Dendritic cell treated with granulocyte-macrophage colony-stimulating factor and Interleukin-4, amounts not matched to agents 40 ng/mL and 50 ng/mL, for 4 days (primary cell): ENCODE measurements at regions of chr16 and their contacts with region 1.

Region 1: GRCh38 chr16:87853411-87854052 is 15.8 kb downstream of the SLC7A5 start:
- H3K4me3 Mint-ChIP-seq: peak overlapping the region; percentile 54
- H3K27ac Mint-ChIP-seq: peak overlapping the region; percentile 74
- H3K4me1 Mint-ChIP-seq: peaks cover 63% of the 10 kb centered on the region
- H3K27me3 Mint-ChIP-seq: peaks cover 10% of the 10 kb centered on the region

Region 2: DNA sequence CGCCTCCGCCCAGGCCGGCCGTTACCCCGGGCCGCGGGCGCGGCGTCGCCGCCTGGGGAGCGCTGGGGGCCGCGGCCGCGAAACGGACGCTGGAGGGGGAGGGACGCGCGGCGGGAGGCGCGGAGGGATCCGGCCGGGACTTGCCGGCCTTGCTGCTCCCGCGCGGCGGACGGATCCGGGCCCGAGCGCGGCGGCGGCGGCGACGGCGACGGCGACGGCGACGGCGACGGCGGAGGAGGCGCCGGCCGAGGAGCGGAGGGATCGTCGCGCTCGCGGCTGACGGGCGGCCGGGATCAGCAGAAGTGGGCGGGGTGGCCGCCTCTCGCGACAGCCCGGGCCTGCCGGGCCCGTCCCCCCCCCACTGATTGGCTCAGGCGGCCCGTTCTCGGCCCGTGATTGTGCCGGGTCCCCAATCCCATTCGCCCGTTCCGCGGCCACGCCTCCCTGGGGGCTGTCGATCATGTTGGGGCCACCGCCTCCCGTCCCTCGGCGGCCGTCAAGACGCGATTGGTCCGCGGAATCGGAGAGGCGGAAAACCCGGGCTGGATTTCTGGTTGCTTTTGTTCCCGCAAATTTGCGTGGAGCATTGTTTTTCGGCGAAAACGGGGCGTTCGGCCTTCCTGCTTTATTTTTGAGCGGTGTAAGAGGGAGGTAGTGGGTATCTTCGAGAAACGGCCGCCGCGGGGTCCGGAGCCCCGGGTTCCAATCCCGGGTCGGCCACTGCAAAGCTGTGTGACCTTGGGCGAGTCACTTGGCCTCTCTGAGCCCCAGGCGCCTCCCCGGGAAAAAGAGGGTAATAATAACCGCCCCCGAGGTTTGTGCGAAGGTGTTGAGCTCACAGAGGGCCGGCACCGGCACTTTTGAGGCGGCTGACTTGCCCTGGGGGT is 360.6 kb before region 1 on chr16 and contains the start of gene ZCCHC14:
- intact Hi-C with region 1: no loop called
- H3K4me3 Mint-ChIP-seq: peak within 1 kb of the TSS; percentile 82
- H3K27ac Mint-ChIP-seq: peak within 1 kb of the TSS; percentile 81
- H3K4me1 Mint-ChIP-seq: peaks cover 54% of the 10 kb centered on the region
- H3K27me3 Mint-ChIP-seq: peaks cover 61% of the 10 kb centered on the region

Region 3: DNA sequence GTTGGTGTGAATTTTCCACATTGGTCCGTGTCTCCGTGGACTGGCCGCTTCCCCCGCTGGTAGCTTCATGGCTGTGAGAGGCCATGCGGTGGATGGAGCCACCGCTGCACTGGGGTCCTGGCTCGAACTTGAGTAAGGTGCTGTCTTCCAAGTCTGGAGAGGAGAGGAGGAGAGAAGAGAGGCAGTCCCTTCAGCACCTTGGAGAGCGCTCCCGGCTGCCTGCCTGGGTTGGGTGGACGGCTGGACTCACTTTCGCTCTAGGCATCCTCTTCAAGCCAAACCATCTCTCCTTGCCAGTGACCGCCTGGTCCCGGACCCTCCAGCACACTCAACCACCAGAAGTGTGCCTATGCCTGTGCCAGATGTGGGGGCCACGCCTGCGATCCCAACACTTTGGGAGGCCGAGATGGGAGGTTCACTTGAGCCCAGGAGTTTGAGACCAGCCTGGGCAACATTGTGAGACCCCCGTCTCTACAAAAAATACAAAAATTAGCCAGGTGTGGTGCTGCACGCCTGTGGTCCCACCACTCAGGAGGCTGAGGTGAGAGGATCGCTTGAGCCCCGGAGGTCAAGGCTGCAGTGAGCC is 245.0 kb before region 1 on chr16:
- intact Hi-C with region 1: no loop called
- H3K4me3 Mint-ChIP-seq: no peak overlapping the region
- H3K27ac Mint-ChIP-seq: no peak overlapping the region
- H3K4me1 Mint-ChIP-seq: no peaks in the 10 kb centered on the region
- H3K27me3 Mint-ChIP-seq: peaks cover 40% of the 10 kb centered on the region

Region 4: DNA sequence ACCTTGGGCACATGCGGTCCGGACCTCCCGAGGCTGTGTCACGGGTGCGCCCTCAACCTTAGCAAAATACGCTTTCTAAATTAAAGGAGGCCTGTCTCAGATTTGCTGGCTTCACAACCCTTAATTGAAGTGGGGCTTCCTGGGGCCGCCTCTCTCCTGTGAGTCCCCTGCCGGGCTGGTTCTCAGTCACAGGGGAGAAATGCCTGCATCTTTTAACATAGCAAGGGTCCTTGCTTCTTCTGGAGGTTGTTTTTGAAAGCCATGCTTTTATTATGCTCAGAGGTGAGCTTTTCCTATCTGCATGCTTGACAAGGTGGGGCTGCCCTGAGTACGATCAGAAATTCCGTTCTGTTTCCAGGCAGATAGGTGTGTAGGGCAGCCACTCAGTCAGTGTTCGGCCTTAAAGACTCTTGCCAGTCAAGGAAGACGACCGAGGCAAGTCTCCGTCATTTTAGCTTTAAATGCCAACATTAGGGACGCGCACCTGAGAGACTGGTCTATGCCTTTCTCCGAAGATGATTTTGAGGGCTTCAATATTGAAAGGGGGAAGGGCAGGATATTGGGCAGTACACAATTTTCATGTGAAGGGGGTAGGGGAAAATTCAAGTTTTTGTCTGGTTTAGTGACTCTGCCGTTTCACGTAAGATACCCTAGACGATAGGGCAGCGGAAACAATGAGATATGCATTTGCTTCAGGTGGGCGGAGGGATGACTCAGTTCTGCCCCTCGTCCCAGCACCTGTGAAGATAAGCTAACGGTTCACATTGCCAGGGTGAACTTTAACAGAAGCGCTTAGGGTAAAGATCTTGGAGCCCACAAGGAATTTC is 21.3 kb after region 1 on chr16:
- intact Hi-C with region 1: loop called (anchors 1 kb)
- H3K4me3 Mint-ChIP-seq: no peak overlapping the region
- H3K27ac Mint-ChIP-seq: no peak overlapping the region
- H3K4me1 Mint-ChIP-seq: peaks cover 22% of the 10 kb centered on the region
- H3K27me3 Mint-ChIP-seq: peaks cover 26% of the 10 kb centered on the region

Region 5: DNA sequence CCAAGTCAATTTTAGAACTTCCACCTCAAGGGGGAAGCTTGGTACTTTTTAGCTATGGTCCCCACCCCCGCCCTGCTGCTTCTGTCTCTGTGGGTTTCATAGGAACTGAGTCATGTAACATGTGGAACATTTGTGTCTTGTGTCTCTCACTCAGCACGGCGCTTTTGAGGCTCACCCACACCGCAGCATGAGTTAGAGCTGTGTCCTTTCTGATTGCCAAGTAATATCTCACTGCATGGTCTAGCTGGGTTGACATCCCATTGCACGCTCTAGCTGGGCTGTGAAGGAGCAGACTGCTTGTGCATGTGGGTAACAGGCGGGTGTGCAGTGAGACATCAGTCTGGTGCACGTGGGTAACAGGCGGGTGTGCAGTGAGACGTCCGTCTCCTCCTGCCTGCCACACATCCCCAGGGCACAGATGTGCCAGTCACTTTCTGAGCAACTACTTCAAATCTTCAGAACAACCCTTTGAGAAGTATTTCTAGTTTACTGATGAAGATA is 42.2 kb after region 1 on chr16:
- intact Hi-C with region 1: loop called (anchors 10 kb)
- H3K4me3 Mint-ChIP-seq: peak overlapping the region; percentile 34
- H3K27ac Mint-ChIP-seq: peak overlapping the region; percentile 88
- H3K4me1 Mint-ChIP-seq: peaks cover 56% of the 10 kb centered on the region
- H3K27me3 Mint-ChIP-seq: peaks cover 17% of the 10 kb centered on the region

Region 6: GRCh38 chr16:87924422-87925298 is 71.1 kb after region 1 on chr16:
- intact Hi-C with region 1: no loop called
- H3K4me3 Mint-ChIP-seq: no peak overlapping the region
- H3K27ac Mint-ChIP-seq: no peak overlapping the region
- H3K4me1 Mint-ChIP-seq: peaks cover 28% of the 10 kb centered on the region
- H3K27me3 Mint-ChIP-seq: peaks cover 41% of the 10 kb centered on the region

Region 7: DNA sequence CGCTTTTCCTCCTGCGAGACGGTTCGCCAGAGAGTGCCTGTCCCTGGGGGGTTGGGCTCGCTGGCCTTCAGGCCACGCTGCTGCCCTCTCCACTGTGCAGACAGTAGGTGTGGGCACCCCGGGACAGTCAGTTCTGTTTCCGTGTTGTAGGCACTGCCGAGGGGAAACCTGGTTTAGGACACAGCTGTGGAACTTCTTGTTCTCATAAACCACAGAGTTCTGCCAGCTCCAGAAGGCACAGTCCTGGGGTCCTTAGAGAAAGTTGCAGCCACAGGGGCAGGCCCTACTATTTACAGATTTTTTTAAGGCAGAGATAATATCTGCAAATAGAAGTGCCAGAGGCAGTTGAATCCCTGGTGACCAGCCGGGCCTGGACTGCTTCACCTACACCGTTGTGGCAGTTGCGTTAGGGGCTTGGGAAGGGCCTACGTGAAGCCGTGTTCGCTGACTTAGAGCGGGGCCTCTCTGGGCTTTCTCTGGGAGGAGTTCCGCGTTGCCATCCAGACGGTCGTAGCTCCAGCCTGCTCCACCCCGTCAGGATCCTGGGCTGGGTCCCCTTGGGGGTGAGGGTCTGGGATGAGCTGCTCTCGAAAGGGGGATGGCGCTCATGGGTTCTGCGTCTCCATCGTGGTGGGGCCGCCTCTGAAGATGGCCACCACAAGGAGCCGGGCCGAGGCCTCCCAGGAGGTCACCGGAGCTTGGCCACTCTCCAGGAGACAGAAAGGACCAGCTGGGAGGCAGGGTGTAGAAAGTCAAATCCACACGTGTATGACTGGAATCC is 224.0 kb after region 1 on chr16:
- intact Hi-C with region 1: no loop called
- H3K4me3 Mint-ChIP-seq: no peak overlapping the region
- H3K27ac Mint-ChIP-seq: no peak overlapping the region
- H3K4me1 Mint-ChIP-seq: no peaks in the 10 kb centered on the region
- H3K27me3 Mint-ChIP-seq: no peaks in the 10 kb centered on the region